MCF 10A (cell line): ENCODE measurements at regions of chr14 and their contacts with region 1.

Region 1: DNA sequence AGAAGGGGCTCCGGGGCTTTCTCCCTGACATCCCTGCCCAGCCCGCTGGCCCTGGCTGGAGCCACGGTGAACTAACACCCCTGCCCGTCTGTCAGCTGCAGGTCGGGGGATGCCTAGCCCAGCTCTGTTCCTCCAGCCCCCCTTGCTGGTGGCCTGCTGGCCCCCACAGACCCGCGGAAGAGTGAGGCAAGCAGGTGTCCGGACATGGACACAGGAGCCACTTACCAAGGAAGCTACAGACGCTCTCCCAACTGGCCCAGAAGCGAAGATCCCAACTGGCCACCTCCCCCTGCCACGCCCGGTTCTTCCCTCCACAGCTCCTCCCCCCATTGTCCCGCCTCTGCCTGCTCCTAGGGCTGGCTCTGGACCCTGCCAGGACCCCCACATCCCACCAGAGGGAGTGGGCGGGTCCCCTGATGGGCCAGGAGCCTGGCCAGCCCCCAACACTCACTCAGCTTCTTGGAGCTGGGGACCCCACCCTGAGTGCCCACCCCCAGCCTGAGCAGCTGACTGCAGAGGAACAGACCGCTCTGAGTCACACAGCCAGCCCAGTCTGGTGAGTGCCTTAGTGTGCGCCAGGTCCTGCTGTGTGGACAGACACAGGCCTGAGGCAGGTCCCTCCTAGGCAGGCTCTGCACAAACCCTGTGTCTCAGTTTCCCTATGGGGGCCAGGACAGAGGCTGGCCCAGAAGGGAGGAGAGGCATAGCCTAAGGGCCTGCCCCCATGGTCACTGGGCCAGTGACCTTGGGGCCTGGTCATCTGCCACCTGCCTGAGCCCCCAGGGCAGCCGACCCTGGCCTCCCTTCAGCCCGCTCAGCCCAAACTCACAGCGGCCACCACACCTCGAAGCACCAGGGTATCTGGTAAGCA is 7.7 kb downstream of the AHNAK2 start:
- DNase-seq: peak; percentile 92
- H3K4me3 Mint-ChIP-seq: peak overlapping the region; percentile 92
- H3K27ac Mint-ChIP-seq: peak overlapping the region; percentile 99
- H3K4me1 Mint-ChIP-seq: peaks cover 35% of the 10 kb centered on the region
- H3K27me3 Mint-ChIP-seq: no peaks in the 10 kb centered on the region
- CTCF ChIP-seq: no peak

Region 2: GRCh38 chr14:104865081-104865643 is 105.3 kb before region 1 on chr14 and contains the start of gene CEP170B:
- CTCF ChIA-PET with region 1: no interaction called
- POLR2A ChIA-PET with region 1: interaction called, 18 read pairs
- intact Hi-C with region 1: no loop called
- DNase-seq: peak; percentile 35
- H3K4me3 Mint-ChIP-seq: peak within 1 kb of the TSS; percentile 89
- H3K27ac Mint-ChIP-seq: peak within 1 kb of the TSS; percentile 90
- H3K4me1 Mint-ChIP-seq: peaks cover 15% of the 10 kb centered on the region
- H3K27me3 Mint-ChIP-seq: no peaks in the 10 kb centered on the region
- CTCF ChIP-seq: no peak
- total RNA-seq, gene CEP170B: 61.8 and 77.4 TPM in 2 replicates

Region 3: GRCh38 chr14:104895786-104896661 is 74.4 kb before region 1 on chr14:
- CTCF ChIA-PET with region 1: interaction called, 3 read pairs
- POLR2A ChIA-PET with region 1: no interaction called
- intact Hi-C with region 1: loop called (anchors 1 kb)
- DNase-seq: no peak
- H3K4me3 Mint-ChIP-seq: no peak overlapping the region
- H3K27ac Mint-ChIP-seq: no peak overlapping the region
- H3K4me1 Mint-ChIP-seq: no peaks in the 10 kb centered on the region
- H3K27me3 Mint-ChIP-seq: no peaks in the 10 kb centered on the region
- CTCF ChIP-seq: no peak

Region 4: DNA sequence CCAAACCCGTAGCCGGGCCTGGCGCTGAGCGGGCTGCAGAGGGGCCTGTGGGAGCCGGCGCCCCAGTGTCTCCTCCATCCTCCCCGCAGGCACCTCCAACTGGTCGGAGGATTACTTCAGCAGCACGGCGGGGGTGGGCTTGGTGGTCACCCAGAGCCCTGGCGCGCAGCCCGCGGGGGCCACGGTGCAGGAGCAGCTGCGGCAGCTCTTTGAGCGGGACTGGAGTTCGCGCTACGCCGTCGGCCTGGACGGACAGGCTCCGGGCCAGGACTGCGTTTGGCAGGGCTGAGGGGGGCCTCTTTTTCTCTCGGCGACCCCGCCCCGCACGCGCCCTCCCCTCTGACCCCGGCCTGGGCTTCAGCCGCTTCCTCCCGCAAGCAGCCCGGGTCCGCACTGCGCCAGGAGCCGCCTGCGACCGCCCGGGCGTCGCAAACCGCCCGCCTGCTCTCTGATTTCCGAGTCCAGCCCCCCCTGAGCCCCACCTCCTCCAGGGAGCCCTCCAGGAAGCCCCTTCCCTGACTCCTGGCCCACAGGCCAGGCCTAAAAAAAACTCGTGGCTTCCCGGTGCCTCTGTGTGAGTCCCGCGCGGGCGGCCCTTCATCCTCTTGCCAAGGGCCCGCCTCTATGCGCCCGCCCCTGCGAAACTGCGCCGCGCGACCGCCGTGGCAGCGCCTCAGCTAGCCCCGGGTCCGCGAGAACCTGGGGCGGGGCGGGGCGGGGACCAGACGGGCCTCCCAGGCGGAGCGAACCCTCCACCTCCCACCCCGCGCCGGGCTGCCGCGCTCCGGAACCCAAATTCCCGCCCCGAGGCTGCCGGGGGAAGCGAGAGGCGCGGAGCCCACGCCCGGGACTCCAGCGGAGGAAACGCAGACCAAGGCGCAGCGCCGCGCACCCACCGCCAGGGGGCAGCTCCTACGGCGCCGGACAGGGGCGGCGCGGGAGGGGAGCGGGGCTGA is 37.5 kb before region 1 on chr14:
- CTCF ChIA-PET with region 1: no interaction called
- POLR2A ChIA-PET with region 1: interaction called, 70 read pairs
- intact Hi-C with region 1: loop called (anchors 1 kb)
- DNase-seq: peak; percentile 68
- H3K4me3 Mint-ChIP-seq: peak overlapping the region; percentile 65
- H3K27ac Mint-ChIP-seq: no peak overlapping the region
- H3K4me1 Mint-ChIP-seq: peaks cover 10% of the 10 kb centered on the region
- H3K27me3 Mint-ChIP-seq: no peaks in the 10 kb centered on the region
- CTCF ChIP-seq: peak; percentile 83

Region 5: GRCh38 chr14:104959858-104960257 is 10.6 kb before region 1 on chr14:
- CTCF ChIA-PET with region 1: interaction called, 5 read pairs
- POLR2A ChIA-PET with region 1: interaction called, 43 read pairs
- intact Hi-C with region 1: no loop called
- DNase-seq: no peak
- H3K4me3 Mint-ChIP-seq: no peak overlapping the region
- H3K27ac Mint-ChIP-seq: no peak overlapping the region
- H3K4me1 Mint-ChIP-seq: peaks cover 7% of the 10 kb centered on the region
- H3K27me3 Mint-ChIP-seq: no peaks in the 10 kb centered on the region
- CTCF ChIP-seq: no peak

Region 6: DNA sequence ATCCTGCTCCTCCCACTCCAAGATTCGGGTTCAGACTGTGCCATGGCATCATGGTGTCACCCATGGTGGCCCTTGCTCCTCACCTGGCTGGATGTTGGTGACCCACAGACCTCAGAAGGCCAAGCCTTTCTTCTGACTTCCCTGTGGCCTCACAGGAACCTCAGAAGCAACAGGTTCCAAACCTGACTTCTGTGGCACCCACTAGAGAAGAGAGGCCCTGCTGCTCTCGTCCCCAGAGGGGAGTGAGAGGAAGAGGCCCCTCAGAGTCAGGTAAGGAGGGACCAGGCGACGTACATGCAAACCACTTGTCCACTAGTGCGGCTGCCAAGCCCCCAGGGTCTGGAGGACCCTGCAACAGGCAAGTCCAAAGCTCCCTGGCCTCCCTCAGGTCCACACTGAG is 25.6 kb after region 1 on chr14:
- CTCF ChIA-PET with region 1: no interaction called
- POLR2A ChIA-PET with region 1: no interaction called
- intact Hi-C with region 1: no loop called
- DNase-seq: no peak
- H3K4me3 Mint-ChIP-seq: no peak overlapping the region
- H3K27ac Mint-ChIP-seq: no peak overlapping the region
- H3K4me1 Mint-ChIP-seq: no peaks in the 10 kb centered on the region
- H3K27me3 Mint-ChIP-seq: no peaks in the 10 kb centered on the region
- CTCF ChIP-seq: no peak

Region 7: GRCh38 chr14:105020815-105021655 is 50.6 kb after region 1 on chr14 and contains the start of gene CDCA4:
- CTCF ChIA-PET with region 1: interaction called, 96 read pairs
- POLR2A ChIA-PET with region 1: interaction called, 636 read pairs
- intact Hi-C with region 1: loop called (anchors 1 kb)
- DNase-seq: peak; percentile 96
- H3K4me3 Mint-ChIP-seq: peak within 1 kb of the TSS; percentile 94
- H3K27ac Mint-ChIP-seq: peak within 1 kb of the TSS; percentile 94
- H3K4me1 Mint-ChIP-seq: peaks cover 43% of the 10 kb centered on the region
- H3K27me3 Mint-ChIP-seq: no peaks in the 10 kb centered on the region
- CTCF ChIP-seq: no peak
- total RNA-seq, gene CDCA4: 29.3 and 33.0 TPM in 2 replicates

Region 8: DNA sequence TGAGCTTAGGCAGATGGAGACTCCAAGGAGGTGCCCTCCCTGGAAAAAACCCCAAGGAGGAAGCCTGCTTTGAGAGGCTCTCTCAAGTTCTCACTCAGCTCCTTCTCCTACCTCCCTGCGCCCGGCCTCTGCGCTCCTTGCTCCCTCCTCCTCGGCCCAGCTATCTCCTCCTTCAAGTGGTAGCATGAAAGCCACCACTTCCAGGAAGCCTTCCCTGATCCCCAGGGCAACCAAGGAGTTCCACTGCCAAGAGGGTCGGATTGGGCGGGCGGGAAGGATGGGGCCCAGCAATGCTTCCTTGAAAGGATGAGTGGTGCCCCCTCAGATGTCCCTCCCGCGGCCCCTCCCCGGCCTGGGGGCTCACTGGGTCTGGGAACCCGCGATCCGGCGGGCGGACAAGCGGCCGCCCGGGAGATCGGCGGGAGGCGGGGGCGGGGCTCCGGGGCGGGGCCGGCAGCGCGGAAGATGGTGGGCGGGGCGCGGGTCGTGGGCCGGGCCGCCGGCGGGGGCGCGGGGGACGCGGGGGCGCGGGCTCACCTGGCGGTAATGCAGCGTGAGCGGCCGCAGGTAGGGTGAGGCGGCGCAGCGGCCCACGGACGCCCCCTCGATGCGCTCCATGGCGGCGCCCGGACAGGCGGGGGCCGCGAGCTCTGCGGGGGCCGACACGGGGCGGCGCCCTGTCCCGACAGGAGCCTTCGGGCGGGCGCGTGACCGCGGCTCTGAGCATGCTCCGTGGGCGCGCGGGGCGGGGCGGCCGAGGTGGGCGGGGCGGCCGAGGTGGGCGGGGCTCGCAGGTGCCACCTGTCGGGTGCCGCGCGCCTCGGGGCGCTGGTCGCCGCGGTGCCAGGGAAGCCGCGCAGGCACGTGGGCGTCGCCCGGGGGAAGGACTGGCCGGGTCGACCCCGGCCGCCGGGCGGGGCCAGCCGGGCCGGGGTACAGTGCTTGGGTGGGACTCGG is 210.4 kb after region 1 on chr14 and contains the start of gene NUDT14:
- CTCF ChIA-PET with region 1: no interaction called
- POLR2A ChIA-PET with region 1: no interaction called
- intact Hi-C with region 1: no loop called
- DNase-seq: peak; percentile 72
- H3K4me3 Mint-ChIP-seq: peak within 1 kb of the TSS; percentile 69
- H3K27ac Mint-ChIP-seq: no peak within 1 kb of the TSS
- H3K4me1 Mint-ChIP-seq: no peaks in the 10 kb centered on the region
- H3K27me3 Mint-ChIP-seq: peaks cover 22% of the 10 kb centered on the region
- CTCF ChIP-seq: no peak
- total RNA-seq, gene NUDT14: 26.1 and 27.4 TPM in 2 replicates